A549 (cell line): ENCODE measurements at regions of chr9 and their contacts with region 1.

Region 1: DNA sequence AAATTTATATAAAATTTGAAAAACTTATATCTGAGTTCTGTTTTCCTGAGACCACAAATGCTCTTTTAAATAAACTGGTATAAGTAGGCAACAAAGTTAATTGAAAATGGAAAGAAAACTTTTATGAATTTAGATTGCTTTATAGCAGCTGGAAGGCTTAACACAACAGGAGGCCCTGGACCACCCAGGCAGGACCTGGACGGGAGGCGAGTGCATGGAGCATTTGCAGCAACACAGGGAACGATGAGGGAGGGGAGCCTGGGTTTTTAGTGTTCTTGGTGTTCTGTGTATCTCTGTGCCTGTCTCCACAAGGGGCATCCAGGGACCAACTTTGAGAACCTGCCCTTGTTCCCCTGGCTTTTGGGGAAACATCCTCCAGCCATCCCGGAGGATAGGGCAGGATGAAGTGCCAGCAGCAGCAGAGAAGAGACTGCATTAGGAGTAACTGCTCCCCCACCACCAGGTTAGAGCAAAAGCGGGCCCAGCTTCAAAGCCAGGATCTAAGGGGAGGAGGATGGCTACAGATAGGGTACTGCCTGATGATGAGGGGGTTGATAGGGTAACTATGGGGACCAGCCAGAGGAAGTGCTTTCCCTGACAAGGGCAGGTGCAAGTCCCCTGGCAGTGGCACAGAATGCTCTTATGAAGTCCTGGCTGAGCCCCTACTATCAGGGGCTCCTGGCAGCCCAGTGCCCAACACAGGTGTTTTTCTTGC is 6.7 kb upstream of the SPATA31E1 start:
- DNase-seq: no peak
- ATAC-seq: no peak
- H3K4me3 ChIP-seq: no peak overlapping the region
- H3K27ac ChIP-seq: peak overlapping the region in 1 of 2 experiments; percentile 84; a peak in 3 of 6 replicates
- H3K4me1 ChIP-seq: peaks cover 13% of the 10 kb centered on the region; the same call in 2 of the 3 replicates
- CTCF ChIP-seq: no peak
- EP300 ChIP-seq: no peak
- POLR2A ChIP-seq: no peak
- RAD21 ChIP-seq: no peak

Region 2: DNA sequence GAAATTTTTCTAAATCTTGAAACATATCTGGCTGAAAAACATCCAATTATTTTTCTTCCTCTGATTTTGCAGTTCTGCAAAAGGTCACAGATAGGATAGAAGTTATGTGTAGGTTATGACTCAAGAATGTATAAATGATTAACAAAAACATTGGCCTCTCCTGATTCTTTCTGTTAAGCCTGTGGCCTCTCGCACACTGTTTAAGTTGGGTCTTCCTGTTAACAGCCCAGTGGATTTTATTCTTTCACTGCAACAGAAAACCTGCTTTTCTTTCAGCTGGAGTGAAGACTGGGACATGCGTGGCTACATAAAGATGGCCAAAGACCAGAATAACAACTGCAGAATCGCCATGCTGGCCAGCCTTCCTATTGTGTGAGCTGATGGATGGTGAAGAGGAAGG is 10.4 kb before region 1 on chr9:
- CTCF ChIA-PET with region 1: interaction called, 11 read pairs
- POLR2A ChIA-PET with region 1: no interaction called
- DNase-seq: peak; percentile 46 to 49
- ATAC-seq: peak; percentile 49 to 67; a peak in 3 of 6 replicates
- H3K4me3 ChIP-seq: peak overlapping the region; percentile 41
- H3K27ac ChIP-seq: peak overlapping the region; percentile 85 to 89
- H3K4me1 ChIP-seq: peaks cover 46% of the 10 kb centered on the region
- CTCF ChIP-seq: no peak
- EP300 ChIP-seq: no peak
- POLR2A ChIP-seq: no peak
- RAD21 ChIP-seq: no peak